ENCODE measurements at regions of chr9 and their contacts with region 1.

Region 1: DNA sequence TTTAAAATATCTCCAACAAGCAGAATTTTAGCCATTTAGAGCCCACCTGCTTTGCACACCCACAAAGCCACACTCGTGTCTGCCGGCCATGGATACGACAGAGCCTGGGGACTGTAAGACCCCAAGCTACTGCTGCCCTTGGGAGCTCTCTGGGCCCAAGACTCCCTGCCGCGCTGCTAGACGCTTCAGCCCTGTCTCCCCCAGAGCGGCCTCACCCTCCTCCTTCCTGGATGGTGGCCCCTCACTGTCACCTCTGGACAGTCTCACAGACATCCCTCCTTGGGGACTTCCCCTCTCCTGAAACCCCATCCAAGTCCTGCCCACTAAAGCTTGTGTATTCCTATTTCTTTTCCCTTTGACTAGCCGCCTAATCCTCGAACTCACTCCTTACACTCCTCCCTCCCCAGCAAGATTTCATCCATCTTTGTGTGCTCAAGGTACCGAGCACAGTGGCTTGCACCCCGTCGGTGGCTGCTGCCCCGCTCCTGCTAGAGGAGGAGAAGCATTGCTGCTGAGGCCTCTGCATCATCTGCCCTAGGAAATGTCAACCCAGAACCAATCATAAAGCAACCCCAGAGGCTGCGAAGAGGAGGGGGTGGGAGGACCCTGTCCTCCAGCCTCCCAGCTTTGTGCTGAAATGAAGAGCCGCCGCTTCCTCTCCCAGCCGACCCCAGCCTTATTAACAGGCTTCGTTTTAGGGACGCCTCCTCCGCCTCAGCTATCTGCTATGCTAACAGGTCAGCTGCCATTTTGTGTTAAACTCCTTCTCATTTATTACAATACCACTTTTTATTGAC is 71.2 kb downstream of the CFAP77 start:
- DNase-seq: no peak
- H3K4me3 ChIP-seq: no peak overlapping the region
- CTCF ChIP-seq: no peak

Region 2: GRCh38 chr9:132551556-132551955 is 70.3 kb after region 1 on chr9:
- in situ Hi-C with region 1: loop called (anchors 5 kb)
- DNase-seq: no peak
- H3K4me3 ChIP-seq: no peak overlapping the region
- CTCF ChIP-seq: no peak

Measured in astrocyte of the cerebellum (primary cell).